HEK293 (cell line): ENCODE measurements at regions of chr3 and their contacts with region 1.

Region 1: DNA sequence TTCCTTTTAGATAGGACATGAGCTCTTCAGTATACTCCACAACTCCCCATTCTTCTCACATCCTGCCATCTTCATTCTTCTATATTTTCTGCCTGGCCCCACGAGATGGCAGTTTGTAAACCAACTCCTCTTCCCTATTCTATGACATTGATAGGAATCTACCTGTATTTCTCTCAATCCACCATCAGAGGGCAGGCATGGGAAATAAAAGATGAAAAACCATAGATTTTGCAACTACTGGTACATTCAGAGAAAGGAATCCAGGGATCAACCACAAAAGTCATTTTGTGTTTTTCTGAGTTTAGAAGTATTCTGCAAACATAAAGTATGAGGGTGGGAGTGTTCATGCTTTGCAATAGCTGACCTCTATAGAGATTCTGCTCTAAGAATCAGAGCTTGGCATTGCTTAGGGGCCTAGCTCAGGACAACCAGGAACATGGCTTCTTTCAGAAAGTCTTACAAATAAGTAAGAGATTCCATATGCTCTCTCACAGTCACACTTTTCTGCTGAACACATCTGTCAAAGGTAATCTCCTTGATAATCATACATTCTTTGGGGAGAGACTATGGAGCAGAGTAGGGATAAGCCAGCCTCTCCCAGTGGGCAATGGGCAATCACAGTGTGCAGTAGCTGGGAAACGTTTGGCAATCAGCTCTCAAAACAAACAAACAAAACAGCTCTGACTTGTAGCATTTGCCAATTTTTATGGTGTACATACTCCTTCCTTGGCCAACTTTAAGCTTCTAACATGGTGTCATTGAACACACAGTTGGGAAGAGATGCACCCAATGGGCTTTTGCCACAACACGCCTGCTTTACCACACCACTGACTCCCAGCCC is 43.1 kb upstream of the SLC25A36 start:
- H3K4me3 ChIP-seq: no peak overlapping the region
- H3K27ac ChIP-seq: no peak overlapping the region
- H3K4me1 ChIP-seq: no peaks in the 10 kb centered on the region
- CTCF ChIP-seq: peak; percentile 29; the same call in 1 of the 2 replicates

Region 2: DNA sequence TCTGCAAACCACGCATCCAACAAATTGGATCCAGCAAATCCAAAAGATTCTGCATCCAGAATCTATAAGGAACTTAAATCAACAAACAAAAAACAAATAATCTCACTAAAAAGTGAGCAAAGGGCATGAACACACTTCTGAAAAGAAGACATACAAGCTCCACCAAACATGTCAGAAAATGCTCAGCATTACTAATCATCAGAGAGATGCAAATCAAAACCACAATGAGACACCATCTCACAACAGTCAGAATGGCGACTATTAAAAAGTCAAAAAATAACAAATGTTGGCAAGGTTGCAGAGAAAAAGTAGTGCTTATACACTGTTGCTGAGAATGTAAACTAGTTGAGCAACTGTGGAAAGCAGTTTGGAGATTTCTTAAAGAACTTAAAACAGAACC is 21.5 kb after region 1 on chr3:
- CTCF ChIA-PET with region 1: interaction called, 10 read pairs
- POLR2A ChIA-PET with region 1: no interaction called
- H3K4me3 ChIP-seq: no peak overlapping the region
- H3K27ac ChIP-seq: no peak overlapping the region
- H3K4me1 ChIP-seq: no peaks in the 10 kb centered on the region
- CTCF ChIP-seq: no peak

Region 3: GRCh38 chr3:140972833-140973232 is 74.3 kb after region 1 on chr3:
- CTCF ChIA-PET with region 1: interaction called, 11 read pairs
- POLR2A ChIA-PET with region 1: no interaction called
- H3K4me3 ChIP-seq: no peak overlapping the region
- H3K27ac ChIP-seq: no peak overlapping the region
- H3K4me1 ChIP-seq: peaks cover 4% of the 10 kb centered on the region; the same call in 1 of the 2 replicates
- CTCF ChIP-seq: no peak

Region 4: DNA sequence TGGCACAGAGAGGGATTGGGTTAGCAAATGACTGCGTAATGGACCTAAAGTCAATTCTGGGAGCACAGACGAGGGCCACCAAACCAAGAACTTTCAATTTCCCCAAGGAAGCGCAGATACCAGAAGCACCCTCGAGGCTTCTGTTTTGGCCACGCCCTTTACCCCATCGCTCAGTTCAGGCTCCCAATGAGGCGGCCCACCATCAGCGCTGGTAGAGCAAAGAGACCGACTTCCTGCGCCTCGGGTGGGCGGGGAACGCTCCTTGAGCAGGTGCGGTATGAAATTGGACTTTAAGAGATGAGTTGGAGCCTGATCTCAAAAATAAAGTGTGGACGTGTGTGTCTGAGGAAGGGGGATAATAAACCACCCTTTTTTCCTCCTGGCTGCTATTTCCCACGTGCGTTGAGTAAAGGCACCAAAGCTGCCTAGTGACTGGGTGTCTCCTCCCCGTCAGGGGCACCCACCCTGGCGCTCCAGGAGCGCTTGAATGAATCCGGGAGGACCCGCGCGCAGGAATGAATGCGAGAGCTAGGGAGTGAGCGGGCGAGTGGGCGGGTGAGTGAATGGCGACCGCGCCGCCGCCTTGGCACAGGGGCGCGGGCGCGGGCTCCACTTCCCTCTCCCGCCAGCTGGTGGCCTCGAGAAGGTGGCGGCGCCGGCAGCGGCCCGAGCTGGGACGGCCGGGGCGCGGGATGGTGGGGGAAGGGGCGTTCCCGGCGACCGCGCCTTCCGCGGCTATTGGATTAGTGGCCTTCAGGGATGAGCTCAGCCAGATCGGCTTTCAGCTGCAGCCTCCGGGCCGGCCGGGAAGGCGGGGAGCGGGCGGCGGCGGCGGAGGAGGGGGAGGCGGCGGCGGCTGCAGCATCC is 152.2 kb after region 1 on chr3 and contains the start of gene SPSB4:
- CTCF ChIA-PET with region 1: no interaction called
- POLR2A ChIA-PET with region 1: no interaction called
- H3K4me3 ChIP-seq: peak within 1 kb of the TSS; percentile 57
- H3K27ac ChIP-seq: peak within 1 kb of the TSS; percentile 8; the same call in 1 of the 2 replicates
- H3K4me1 ChIP-seq: no peaks in the 10 kb centered on the region
- CTCF ChIP-seq: no peak

Region 5: GRCh38 chr3:141192345-141192744 is 293.8 kb after region 1 on chr3:
- CTCF ChIA-PET with region 1: interaction called, 19 read pairs
- POLR2A ChIA-PET with region 1: no interaction called
- H3K4me3 ChIP-seq: no peak overlapping the region
- H3K27ac ChIP-seq: no peak overlapping the region
- H3K4me1 ChIP-seq: no peaks in the 10 kb centered on the region
- CTCF ChIP-seq: peak; percentile 91